ENCODE measurements at regions of chr5 and their contacts with region 1.

Region 1: GRCh38 chr5:96584712-96585111 is 77.5 kb upstream of the CAST start:
- DNase-seq: no peak
- CTCF ChIP-seq: no peak

Region 2: DNA sequence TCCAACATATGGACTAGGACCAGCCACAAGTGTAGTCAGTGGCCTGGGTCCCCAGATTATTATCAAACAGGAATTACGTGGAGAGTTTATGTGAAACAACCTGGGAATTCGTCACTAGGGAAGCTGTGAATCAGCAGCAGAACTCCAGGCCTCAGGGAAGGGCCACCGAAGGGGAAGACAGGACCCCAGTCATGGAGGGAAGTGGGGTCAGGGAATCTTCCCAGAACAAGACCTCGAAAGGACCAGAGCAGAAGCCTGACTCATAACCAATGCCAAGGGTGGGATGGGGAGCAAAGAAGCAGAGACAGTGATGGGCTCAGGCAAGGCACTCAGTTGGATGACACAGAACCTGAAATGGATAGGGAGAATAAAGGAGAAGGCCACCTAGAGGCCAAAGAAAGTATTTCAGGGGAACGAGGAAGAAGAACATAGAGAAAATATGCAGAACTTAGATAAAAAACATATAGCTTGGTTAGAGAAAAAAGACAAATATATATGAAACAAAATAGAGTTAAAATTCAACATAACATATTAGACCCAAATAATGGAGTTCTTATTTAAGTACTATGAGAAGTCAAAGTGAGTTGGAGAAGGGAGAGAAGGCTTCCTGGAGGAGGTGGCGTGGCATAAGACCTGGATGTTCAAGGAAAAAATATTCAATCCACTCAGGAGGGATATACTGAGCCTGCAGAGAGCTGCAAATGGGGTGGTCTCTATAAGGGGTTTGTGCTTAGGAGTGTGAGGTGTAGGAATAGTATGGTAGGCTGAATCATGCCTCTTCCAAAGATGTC is 10.8 kb after region 1 on chr5:
- CTCF ChIA-PET with region 1: interaction called, 14 read pairs
- POLR2A ChIA-PET with region 1: no interaction called
- DNase-seq: peak; percentile 22
- CTCF ChIP-seq: no peak